H1 (cell line): ENCODE measurements at regions of chr12 and their contacts with region 1.

Region 1: GRCh38 chr12:2959505-2960389 is 550 bp downstream of the TEAD4 start:
- DNase-seq: peak in 1 of 2 experiments; percentile 73
- H3K4me3 ChIP-seq: peak overlapping the region; percentile 58 to 87 (median 72)
- H3K27ac ChIP-seq: peak overlapping the region; percentile 82; the same call in 1 of the 2 replicates
- H3K4me1 ChIP-seq: peaks cover 11 to 38% (median 21%) of the 10 kb centered on the region in 4 experiments
- H3K27me3 ChIP-seq: peaks cover 0 to 6% (median 3%) of the 10 kb centered on the region in 4 experiments; a peak in 4 of 7 replicates
- CTCF ChIP-seq: no peak
- EP300 ChIP-seq: no peak
- POLR2A ChIP-seq: peak in 1 of 2 experiments; percentile 11; a peak in 1 of 3 replicates
- RAD21 ChIP-seq: no peak

Region 2: DNA sequence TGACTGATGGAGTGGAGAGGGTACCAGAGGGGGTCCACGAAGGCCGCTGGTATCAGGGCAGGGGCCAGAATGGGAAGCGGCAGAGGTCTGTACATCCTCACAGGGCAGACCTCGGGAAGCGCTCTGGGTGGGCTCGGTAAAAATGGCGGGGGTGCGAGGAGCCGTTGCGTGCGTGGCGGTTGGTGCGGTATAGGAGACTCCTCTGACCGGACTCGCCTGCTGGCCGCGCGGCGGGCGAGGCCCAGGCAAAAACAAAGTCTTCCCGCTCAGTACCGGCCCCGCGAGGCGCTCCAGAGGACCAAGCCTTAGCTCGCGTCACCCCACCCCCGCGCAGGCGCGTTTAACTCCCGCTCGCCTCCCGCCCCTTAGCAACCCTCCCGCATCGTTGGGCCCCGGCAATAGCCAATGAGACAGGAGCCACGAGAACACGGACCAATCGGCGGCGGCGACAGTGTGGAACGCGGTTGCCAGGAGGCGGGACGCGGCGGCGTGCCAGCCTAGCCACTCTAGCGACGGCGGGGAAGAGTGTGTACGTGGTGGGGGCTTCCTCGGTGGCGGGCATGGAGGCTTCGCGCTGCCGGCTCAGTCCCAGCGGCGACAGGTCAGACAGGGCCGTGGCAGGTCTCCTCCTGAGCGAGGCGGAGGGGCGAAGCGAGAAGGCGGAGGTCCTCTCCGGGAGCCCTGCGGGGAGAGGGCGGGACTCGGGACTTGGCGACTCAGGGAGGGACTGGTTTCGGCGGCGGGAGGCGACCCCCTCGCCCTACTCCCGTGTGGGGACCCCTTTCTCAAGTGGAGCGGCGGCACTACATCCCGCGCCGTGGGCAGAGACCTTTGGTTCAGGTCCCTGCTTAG is 69.1 kb before region 1 on chr12 and contains the start of gene TULP3:
- CTCF ChIA-PET with region 1: interaction called, 7 read pairs
- POLR2A ChIA-PET with region 1: interaction called, 12 read pairs
- DNase-seq: peak; percentile 78 to 98
- H3K4me3 ChIP-seq: peak within 1 kb of the TSS; percentile 71 to 88 (median 86)
- H3K27ac ChIP-seq: peak within 1 kb of the TSS; percentile 57; the same call in 1 of the 2 replicates
- H3K4me1 ChIP-seq: peaks cover 0 to 3% (median 2%) of the 10 kb centered on the region in 4 experiments; a peak in 3 of 7 replicates
- H3K27me3 ChIP-seq: no peaks in the 10 kb centered on the region
- CTCF ChIP-seq: no peak
- EP300 ChIP-seq: no peak
- POLR2A ChIP-seq: peak in 1 of 2 experiments; percentile 74; a peak in 2 of 3 replicates
- RAD21 ChIP-seq: no peak
- total RNA-seq, gene TULP3: 18.4 and 21.7 TPM in 2 replicates

Region 3: GRCh38 chr12:2974560-2974971 is 14.8 kb after region 1 on chr12:
- CTCF ChIA-PET with region 1: interaction called, 7 read pairs
- POLR2A ChIA-PET with region 1: interaction called, 37 read pairs
- DNase-seq: peak in 1 of 2 experiments; percentile 53
- H3K4me3 ChIP-seq: no peak overlapping the region
- H3K27ac ChIP-seq: no peak overlapping the region
- H3K4me1 ChIP-seq: peaks cover 6 to 23% (median 11%) of the 10 kb centered on the region in 4 experiments
- H3K27me3 ChIP-seq: no peaks in the 10 kb centered on the region
- CTCF ChIP-seq: no peak
- EP300 ChIP-seq: no peak
- POLR2A ChIP-seq: peak in 1 of 2 experiments; percentile 21; a peak in 1 of 3 replicates
- RAD21 ChIP-seq: no peak

Region 4: DNA sequence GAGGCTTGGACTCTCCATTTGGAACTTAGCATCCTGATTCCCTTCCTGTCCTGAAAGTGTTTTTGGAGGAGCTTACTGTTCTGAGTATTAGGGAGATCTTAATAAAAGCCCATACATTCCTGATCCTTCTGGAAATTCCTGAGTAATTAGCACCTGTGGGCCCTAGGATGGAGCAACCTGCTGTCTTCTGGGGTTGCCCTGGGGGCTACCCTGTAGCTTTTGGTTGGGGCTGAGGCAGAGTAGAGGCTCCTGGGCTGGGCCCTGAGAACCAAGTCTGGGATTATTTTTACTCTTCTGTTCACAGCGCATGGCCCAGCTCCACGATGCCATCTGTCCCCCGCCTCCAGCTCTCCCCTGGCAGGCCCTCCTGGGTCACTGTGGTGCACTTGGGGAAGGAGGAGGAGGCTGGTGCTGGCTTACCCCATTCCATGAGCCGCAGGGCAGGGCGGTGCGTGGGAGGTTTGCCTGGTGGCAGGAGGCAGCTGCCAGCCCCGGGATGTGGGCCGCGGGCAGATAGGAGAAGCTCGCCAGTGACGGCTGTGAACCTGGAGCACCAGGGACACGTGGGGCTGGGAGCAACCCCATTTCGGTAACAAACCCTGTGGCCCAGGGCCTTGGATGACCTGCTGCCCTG is 22.5 kb after region 1 on chr12:
- CTCF ChIA-PET with region 1: interaction called, 6 read pairs
- POLR2A ChIA-PET with region 1: interaction called, 37 read pairs
- DNase-seq: no peak
- H3K4me3 ChIP-seq: no peak overlapping the region
- H3K27ac ChIP-seq: no peak overlapping the region
- H3K4me1 ChIP-seq: peaks cover 1 to 9% (median 3%) of the 10 kb centered on the region in 4 experiments; a peak in 3 of 7 replicates
- H3K27me3 ChIP-seq: no peaks in the 10 kb centered on the region
- CTCF ChIP-seq: no peak
- EP300 ChIP-seq: no peak
- POLR2A ChIP-seq: no peak
- RAD21 ChIP-seq: no peak